Activated CD4-positive, alpha-beta T cell treated with anti-CD3 and anti-CD28 coated beads, Interleukin-2, amount 10 ng/mL, durations not matched to agents 7 days and 5 days (primary cell): ENCODE measurements at regions of chrX and their contacts with region 1.

Region 1: DNA sequence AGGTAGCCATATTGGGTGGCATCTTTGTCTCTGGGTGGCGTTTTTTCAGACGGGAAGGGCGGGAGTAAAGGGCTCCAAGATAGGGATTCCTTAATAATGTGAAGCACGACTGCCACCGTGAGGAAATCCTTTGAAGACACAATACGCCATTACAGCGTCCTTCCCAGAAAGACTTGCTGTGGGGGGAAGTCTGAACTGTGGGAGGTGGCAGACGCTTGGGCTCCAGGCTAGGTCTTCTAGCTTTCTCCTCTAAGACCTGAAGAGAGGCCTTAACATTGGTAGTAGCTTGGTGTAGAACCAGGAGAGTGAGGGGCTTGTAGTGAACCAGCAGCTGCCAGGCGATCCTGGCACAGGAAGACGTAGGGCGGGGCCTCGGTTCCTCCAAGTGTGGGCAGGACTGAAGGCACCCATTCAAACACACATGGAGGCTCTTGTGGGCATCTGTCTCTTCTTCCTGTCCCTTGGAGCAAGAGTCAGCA is 197.3 kb downstream of the OR13H1 start:
- DNase-seq: no peak
- H3K4me3 Mint-ChIP-seq: no peak overlapping the region
- H3K27ac Mint-ChIP-seq: no peak overlapping the region
- H3K4me1 Mint-ChIP-seq: no peaks in the 10 kb centered on the region
- H3K27me3 Mint-ChIP-seq: no peaks in the 10 kb centered on the region

Region 2: GRCh38 chrX:131634900-131635299 is 106.2 kb before region 1 on chrX:
- CTCF ChIA-PET with region 1: no interaction called
- POLR2A ChIA-PET with region 1: no interaction called
- DNase-seq: no peak
- H3K4me3 Mint-ChIP-seq: no peak overlapping the region
- H3K27ac Mint-ChIP-seq: no peak overlapping the region
- H3K4me1 Mint-ChIP-seq: no peaks in the 10 kb centered on the region
- H3K27me3 Mint-ChIP-seq: no peaks in the 10 kb centered on the region

Region 3: GRCh38 chrX:131704136-131704695 is 36.9 kb before region 1 on chrX:
- CTCF ChIA-PET with region 1: interaction called, 16 read pairs
- POLR2A ChIA-PET with region 1: no interaction called
- DNase-seq: no peak
- H3K4me3 Mint-ChIP-seq: no peak overlapping the region
- H3K27ac Mint-ChIP-seq: no peak overlapping the region
- H3K4me1 Mint-ChIP-seq: no peaks in the 10 kb centered on the region
- H3K27me3 Mint-ChIP-seq: no peaks in the 10 kb centered on the region

Region 4: DNA sequence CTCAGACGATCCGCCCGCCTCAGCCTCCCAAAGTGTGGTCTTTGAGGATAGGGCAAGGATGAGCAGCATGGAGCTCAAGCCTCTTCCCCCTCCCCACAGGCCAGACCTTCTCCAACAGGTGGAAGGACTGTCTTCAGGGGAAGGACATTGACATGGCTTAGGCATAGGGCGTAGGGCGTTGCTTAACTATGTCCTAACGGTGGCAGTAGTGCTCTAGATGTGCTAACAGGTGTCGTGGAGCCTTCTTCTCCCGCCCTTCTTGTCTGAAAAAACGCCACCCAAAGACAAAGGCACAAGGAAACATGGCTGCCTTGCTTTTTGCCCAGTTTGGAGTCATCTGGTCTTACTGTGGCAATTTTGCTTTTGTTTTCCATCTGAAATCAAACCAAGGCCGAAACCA is 22.5 kb after region 1 on chrX:
- CTCF ChIA-PET with region 1: interaction called, 12 read pairs
- POLR2A ChIA-PET with region 1: no interaction called
- DNase-seq: no peak
- H3K4me3 Mint-ChIP-seq: no peak overlapping the region
- H3K27ac Mint-ChIP-seq: no peak overlapping the region
- H3K4me1 Mint-ChIP-seq: no peaks in the 10 kb centered on the region
- H3K27me3 Mint-ChIP-seq: no peaks in the 10 kb centered on the region

Region 5: GRCh38 chrX:131792789-131793462 is 51.8 kb after region 1 on chrX:
- CTCF ChIA-PET with region 1: interaction called, 14 read pairs
- POLR2A ChIA-PET with region 1: no interaction called
- DNase-seq: no peak
- H3K4me3 Mint-ChIP-seq: no peak overlapping the region
- H3K27ac Mint-ChIP-seq: no peak overlapping the region
- H3K4me1 Mint-ChIP-seq: no peaks in the 10 kb centered on the region
- H3K27me3 Mint-ChIP-seq: no peaks in the 10 kb centered on the region

Region 6: DNA sequence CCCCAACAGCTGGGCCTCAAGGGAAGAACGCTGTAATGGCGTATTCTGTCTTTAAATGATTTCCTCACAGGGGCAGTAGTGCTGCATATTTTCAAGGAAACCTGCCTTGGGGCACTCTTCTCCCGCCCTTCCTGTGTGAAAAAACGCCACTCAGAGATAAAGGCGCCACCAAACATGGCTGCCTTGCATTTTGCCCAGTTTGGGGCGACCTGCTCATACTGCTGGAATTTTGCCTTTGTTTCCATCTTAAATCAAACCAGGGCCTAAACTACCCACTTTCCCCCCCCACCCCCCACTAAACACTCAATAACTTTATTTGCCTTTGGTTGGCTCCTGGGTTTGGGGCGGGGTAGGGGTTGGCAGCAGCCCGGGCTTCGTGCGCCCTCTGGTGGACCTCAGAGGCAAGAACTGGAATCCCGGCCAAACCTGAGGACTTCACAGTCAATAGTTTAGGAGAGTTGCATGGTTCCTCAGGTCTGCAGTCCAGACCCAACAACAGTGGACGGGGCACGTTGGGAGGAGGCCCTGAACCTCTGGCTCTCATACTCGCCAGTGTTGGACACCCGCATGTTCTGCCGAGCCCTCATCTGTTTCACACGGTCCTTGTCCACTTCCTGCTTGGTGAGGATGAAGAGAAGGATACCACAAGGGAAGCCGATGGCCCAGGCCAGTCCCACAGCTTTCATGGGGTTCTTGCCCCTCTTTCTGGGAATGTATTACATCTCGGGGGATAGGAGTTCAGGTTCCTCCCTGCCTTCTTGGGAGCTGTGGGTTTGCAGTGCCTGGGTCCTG is 61.9 kb after region 1 on chrX:
- CTCF ChIA-PET with region 1: interaction called, 11 read pairs
- POLR2A ChIA-PET with region 1: no interaction called
- DNase-seq: no peak
- H3K4me3 Mint-ChIP-seq: no peak overlapping the region
- H3K27ac Mint-ChIP-seq: no peak overlapping the region
- H3K4me1 Mint-ChIP-seq: no peaks in the 10 kb centered on the region
- H3K27me3 Mint-ChIP-seq: no peaks in the 10 kb centered on the region

Region 7: GRCh38 chrX:131812836-131813825 is 72.0 kb after region 1 on chrX:
- CTCF ChIA-PET with region 1: interaction called, 16 read pairs
- POLR2A ChIA-PET with region 1: no interaction called
- DNase-seq: peak; percentile 82
- H3K4me3 Mint-ChIP-seq: peak overlapping the region; percentile 75
- H3K27ac Mint-ChIP-seq: peak overlapping the region; percentile 97
- H3K4me1 Mint-ChIP-seq: peaks cover 34% of the 10 kb centered on the region
- H3K27me3 Mint-ChIP-seq: no peaks in the 10 kb centered on the region